PC-3 (cell line): ENCODE measurements at regions of chr2 and their contacts with region 1.

Region 1: GRCh38 chr2:219073413-219074129 is 12.8 kb upstream of the IHH start:
- DNase-seq: peak; percentile 83
- ATAC-seq: peak; percentile 59; the same call in 1 of the 2 replicates
- H3K4me3 ChIP-seq: no peak overlapping the region
- H3K27ac ChIP-seq: no peak overlapping the region
- H3K4me1 ChIP-seq: peaks cover 16% of the 10 kb centered on the region
- H3K27me3 ChIP-seq: no peaks in the 10 kb centered on the region
- CTCF ChIP-seq: peak; percentile 77

Region 2: DNA sequence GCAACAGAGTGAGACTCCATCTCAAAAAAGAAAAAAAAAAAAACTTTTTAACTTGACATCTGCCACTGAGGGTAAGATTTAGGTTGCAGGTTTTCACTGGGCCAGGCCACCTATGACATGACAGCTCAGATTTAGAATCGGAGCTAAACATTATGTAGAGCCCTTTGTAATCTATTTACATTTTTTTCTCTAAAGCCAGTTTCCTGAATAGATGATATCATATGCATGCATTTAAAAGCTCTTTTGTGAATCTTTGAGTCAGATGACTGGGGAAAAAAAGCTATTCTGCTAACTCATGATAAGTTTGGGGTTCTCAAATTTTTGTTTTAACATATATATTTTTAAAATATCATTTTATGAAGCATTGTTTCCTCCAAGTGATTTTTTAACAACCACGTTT is 263.3 kb before region 1 on chr2:
- CTCF ChIA-PET with region 1: no interaction called
- POLR2A ChIA-PET with region 1: interaction called, 10 read pairs
- intact Hi-C with region 1: no loop called
- DNase-seq: no peak
- ATAC-seq: no peak
- H3K4me3 ChIP-seq: no peak overlapping the region
- H3K27ac ChIP-seq: no peak overlapping the region
- H3K4me1 ChIP-seq: peaks cover 12% of the 10 kb centered on the region
- H3K27me3 ChIP-seq: no peaks in the 10 kb centered on the region
- CTCF ChIP-seq: no peak

Region 3: DNA sequence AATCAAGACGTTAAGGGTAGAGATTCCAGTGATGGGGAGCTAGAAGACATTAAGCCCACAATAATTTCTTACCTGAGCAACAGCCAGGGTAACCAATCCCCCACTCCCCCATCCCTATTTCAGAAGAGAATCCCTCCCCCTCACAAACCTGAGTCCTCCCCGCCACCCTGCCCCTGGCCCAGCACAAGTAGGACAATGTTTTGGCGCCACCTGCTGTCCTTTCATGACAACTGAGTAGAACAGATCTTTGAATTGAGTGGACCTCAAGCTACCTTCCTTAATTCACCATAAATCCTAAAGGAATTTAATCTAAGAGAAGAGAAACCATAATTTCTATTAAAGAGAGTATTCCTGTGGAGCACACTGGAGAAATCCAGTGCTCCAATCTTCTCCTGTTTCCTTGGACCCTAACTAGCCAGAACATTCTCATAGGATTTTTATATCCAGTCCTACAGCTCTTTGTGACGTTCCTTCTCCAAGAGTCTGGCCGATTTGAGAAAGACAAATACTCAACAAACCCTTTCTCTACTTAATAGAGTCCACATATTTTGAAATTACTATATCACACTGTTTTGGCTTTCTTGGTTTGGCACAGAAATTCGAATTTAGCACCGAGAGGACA is 46.0 kb after region 1 on chr2:
- CTCF ChIA-PET with region 1: interaction called, 5 read pairs
- POLR2A ChIA-PET with region 1: no interaction called
- intact Hi-C with region 1: loop called (anchors 5 kb)
- DNase-seq: peak; percentile 72
- ATAC-seq: peak; percentile 78
- H3K4me3 ChIP-seq: no peak overlapping the region
- H3K27ac ChIP-seq: no peak overlapping the region
- H3K4me1 ChIP-seq: peaks cover 25% of the 10 kb centered on the region
- H3K27me3 ChIP-seq: no peaks in the 10 kb centered on the region
- CTCF ChIP-seq: peak; percentile 93

Region 4: GRCh38 chr2:219142329-219142728 is 68.8 kb after region 1 on chr2:
- CTCF ChIA-PET with region 1: no interaction called
- POLR2A ChIA-PET with region 1: no interaction called
- intact Hi-C with region 1: loop called (anchors 5 kb)
- DNase-seq: peak; percentile 92
- ATAC-seq: peak; percentile 100
- H3K4me3 ChIP-seq: no peak overlapping the region
- H3K27ac ChIP-seq: no peak overlapping the region
- H3K4me1 ChIP-seq: peaks cover 14% of the 10 kb centered on the region
- H3K27me3 ChIP-seq: no peaks in the 10 kb centered on the region
- CTCF ChIP-seq: peak; percentile 41